ENCODE measurements at regions of chr11 and their contacts with region 1.

Region 1: DNA sequence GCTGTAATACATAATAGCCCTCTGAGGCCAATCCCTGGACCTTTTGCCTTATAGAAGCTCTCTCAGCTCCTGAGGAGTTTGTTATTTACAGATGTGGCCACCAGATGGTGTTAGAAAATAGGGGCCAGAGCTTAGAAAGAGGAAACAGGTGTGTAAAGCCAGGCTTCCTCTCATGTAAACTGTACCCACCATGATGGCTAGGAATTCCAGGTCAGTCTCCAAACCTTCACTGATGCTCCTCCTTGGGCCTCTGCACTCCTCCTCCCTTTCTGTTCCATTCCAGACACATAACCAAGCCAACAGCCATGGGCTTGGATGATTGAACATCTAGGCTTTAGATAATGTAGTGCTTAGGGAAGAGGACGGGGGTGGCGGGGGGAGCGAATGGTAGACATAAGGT is 39.7 kb downstream of the USP35 start:
- DNase-seq: peak; percentile 63
- H3K4me3 Mint-ChIP-seq: no peak overlapping the region
- H3K27ac Mint-ChIP-seq: no peak overlapping the region
- H3K4me1 Mint-ChIP-seq: peaks cover 8% of the 10 kb centered on the region
- H3K27me3 Mint-ChIP-seq: no peaks in the 10 kb centered on the region
- CTCF ChIP-seq: peak; percentile 47

Region 2: GRCh38 chr11:78216571-78217287 is 11.7 kb before region 1 on chr11:
- CTCF ChIA-PET with region 1: interaction called, 17 read pairs
- POLR2A ChIA-PET with region 1: no interaction called
- intact Hi-C with region 1: no loop called
- DNase-seq: peak; percentile 27
- H3K4me3 Mint-ChIP-seq: no peak overlapping the region
- H3K27ac Mint-ChIP-seq: no peak overlapping the region
- H3K4me1 Mint-ChIP-seq: peaks cover 6% of the 10 kb centered on the region
- H3K27me3 Mint-ChIP-seq: no peaks in the 10 kb centered on the region
- CTCF ChIP-seq: no peak

Region 3: GRCh38 chr11:78239781-78240180 is 11.3 kb after region 1 on chr11:
- CTCF ChIA-PET with region 1: interaction called, 11 read pairs
- POLR2A ChIA-PET with region 1: interaction called, 3 read pairs
- intact Hi-C with region 1: no loop called
- DNase-seq: no peak
- H3K4me3 Mint-ChIP-seq: no peak overlapping the region
- H3K27ac Mint-ChIP-seq: no peak overlapping the region
- H3K4me1 Mint-ChIP-seq: no peaks in the 10 kb centered on the region
- H3K27me3 Mint-ChIP-seq: no peaks in the 10 kb centered on the region
- CTCF ChIP-seq: no peak

Region 4: GRCh38 chr11:78416305-78417178 is 188.1 kb after region 1 on chr11:
- CTCF ChIA-PET with region 1: interaction called, 19 read pairs
- POLR2A ChIA-PET with region 1: interaction called, 5 read pairs
- intact Hi-C with region 1: loop called (anchors 1 kb)
- DNase-seq: peak; percentile 66
- H3K4me3 Mint-ChIP-seq: peak overlapping the region; percentile 78
- H3K27ac Mint-ChIP-seq: peak overlapping the region; percentile 57
- H3K4me1 Mint-ChIP-seq: peaks cover 19% of the 10 kb centered on the region
- H3K27me3 Mint-ChIP-seq: no peaks in the 10 kb centered on the region
- CTCF ChIP-seq: peak; percentile 47

Region 5: GRCh38 chr11:78432058-78432515 is 203.6 kb after region 1 on chr11:
- CTCF ChIA-PET with region 1: interaction called, 11 read pairs
- POLR2A ChIA-PET with region 1: interaction called, 3 read pairs
- intact Hi-C with region 1: loop called (anchors 1 kb)
- DNase-seq: peak; percentile 30
- H3K4me3 Mint-ChIP-seq: no peak overlapping the region
- H3K27ac Mint-ChIP-seq: no peak overlapping the region
- H3K4me1 Mint-ChIP-seq: no peaks in the 10 kb centered on the region
- H3K27me3 Mint-ChIP-seq: no peaks in the 10 kb centered on the region
- CTCF ChIP-seq: peak; percentile 40

Measured in MCF 10A (cell line).